ENCODE measurements at regions of chr3 and their contacts with region 1.

Region 1: DNA sequence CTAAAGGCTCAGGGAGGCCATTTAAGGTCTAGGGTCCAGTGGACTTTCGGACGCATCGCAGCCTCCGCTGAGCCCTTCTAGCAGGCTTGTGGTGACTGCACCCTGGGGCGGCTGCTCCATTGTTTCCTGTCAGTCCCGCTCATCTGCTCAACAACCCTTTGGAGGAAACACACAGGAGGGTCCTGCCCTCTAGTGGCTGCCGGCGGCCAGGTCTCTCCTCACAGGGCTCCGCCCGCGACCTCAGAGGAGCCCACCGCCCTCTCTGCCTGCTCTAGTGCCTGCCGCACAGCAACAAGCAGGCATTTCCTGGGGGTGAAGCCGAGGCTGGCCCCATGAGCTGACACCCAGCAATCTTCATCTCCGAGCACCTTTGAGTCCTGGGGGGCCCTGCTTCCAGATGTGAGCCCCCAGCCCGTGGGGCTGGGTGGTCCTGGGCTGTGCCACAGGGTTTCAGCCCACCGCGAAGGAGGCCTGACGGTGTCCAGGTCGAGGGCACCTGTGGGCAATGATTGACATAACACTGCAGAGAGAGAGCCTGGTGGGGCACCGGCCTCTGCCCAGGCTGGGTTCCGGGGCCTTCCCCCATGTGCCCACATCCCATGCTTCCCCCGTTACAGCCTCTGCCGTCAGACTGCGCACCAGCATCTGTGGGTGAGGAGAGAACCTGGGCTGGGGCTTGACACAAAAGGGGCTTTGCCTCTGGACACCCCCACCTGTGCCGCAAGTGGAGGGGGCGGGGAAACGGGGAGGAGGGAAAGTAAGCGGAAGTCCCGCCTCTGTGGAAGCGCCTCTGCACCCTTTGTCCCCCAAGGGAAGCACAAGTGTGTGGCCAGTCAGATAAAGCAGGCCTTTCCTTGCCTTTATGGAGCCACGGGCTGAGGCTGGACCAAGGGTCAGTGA is 27.0 kb upstream of the SFMBT1 start:
- DNase-seq: peak; percentile 51 to 97 (median 82)

Region 2: GRCh38 chr3:52742418-52743041 is 330.4 kb before region 1 on chr3:
- intact Hi-C with region 1: loop called (anchors 5 kb)
- DNase-seq: no peak

Region 3: GRCh38 chr3:52851348-52851747 is 221.6 kb before region 1 on chr3:
- intact Hi-C with region 1: loop called (anchors 2 kb)
- DNase-seq: peak in 3 of 10 donors; percentile 25 to 35 (median 35)

Measured in posterior cingulate gyrus (tissue), 11 donors.